CD4-positive, alpha-beta T cell (primary cell): ENCODE measurements at regions of chr7 and their contacts with region 1.

Region 1: DNA sequence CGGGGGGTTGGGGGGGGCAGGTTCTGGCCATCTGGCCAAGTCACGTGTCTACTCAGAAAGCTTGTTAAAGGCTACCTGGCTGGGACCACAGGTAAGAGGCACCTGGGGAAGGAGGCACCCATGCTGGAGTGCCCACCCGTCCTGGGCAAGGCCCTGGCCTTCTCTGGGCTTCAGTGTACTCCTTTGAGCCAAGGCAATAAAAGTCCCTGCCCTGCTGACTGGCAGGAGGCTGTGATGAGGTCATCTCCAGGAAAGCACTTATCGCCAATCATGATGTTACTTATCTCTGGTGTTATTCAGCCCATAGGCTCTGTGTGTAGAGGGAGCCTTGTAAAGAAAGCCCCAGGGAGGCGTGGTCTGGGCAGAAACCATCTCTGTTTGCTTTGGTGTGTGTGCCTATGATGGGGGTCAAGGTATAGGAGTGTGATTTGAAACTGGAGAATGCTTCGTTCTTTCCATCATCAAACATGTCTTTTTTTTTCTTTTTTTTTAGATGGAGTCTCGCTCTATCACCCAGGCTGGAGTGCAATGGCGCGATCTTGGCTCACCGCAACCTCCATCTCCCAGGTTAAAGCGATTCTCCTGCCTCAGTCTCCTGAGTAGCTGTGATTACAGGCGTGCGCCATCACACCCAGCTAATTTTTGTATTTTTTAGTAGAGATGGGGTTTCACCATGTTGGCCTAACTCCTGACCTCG is 2.5 kb upstream of the CLDN4 start:
- DNase-seq: peak in 4 of 14 experiments; percentile 14 to 58 (median 34)
- ATAC-seq: peak; percentile 61
- H3K4me3 ChIP-seq: no peak overlapping the region
- H3K4me3 Mint-ChIP-seq: no peak overlapping the region
- H3K27ac ChIP-seq: no peak overlapping the region
- H3K27ac Mint-ChIP-seq: no peak overlapping the region
- H3K4me1 ChIP-seq: peaks cover 50% of the 10 kb centered on the region
- H3K4me1 Mint-ChIP-seq: peaks cover 43% of the 10 kb centered on the region
- H3K27me3 ChIP-seq: peaks cover 0 to 5% of the 10 kb centered on the region in 2 experiments
- H3K27me3 Mint-ChIP-seq: peaks cover 10% of the 10 kb centered on the region
- CTCF ChIP-seq: no peak

Region 2: DNA sequence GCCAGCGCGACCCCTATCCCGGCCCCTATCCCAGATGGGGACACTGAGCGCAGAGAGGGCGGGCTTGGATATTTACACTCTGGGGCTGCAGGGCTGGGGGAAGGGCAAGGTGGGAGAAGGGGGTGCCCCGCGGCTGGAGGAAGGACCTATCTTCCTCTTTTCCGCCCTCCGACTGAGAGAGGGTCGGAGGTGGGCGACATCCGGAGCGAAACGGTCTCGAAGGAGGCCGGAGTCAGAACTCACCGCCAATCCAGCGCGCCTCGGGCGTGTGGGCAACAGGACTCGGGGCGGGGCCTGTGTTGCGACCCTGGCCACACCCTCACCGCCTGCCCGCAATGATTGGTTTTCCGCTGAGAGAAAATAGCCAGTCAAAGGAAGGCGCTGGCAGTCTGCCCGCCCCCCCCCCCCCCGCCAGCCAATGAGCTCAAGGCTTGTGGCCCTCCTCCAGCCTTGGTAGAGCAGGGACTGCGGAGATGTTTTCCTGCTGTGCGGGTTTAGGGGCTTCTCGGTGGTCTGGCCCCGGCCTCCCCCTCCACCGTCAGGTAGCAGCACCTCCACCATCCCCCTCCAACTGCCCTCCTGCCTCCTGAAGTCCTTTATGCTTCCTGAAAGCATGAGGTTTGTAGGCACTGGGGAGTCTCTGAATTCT is 14.1 kb after region 1 on chr7 and contains the start of gene METTL27:
- CTCF ChIA-PET with region 1: interaction called, 3 read pairs
- POLR2A ChIA-PET with region 1: interaction called, 14 read pairs
- intact Hi-C with region 1: no loop called
- DNase-seq: peak; percentile 79 to 94 (median 87)
- ATAC-seq: peak; percentile 99
- H3K4me3 ChIP-seq: peak within 1 kb of the TSS; percentile 71
- H3K4me3 Mint-ChIP-seq: peak within 1 kb of the TSS; percentile 90
- H3K27ac ChIP-seq: no peak within 1 kb of the TSS
- H3K27ac Mint-ChIP-seq: peak within 1 kb of the TSS; percentile 61
- H3K4me1 ChIP-seq: peaks cover 20% of the 10 kb centered on the region
- H3K4me1 Mint-ChIP-seq: peaks cover 14% of the 10 kb centered on the region
- H3K27me3 ChIP-seq: no peaks in the 10 kb centered on the region
- H3K27me3 Mint-ChIP-seq: no peaks in the 10 kb centered on the region
- CTCF ChIP-seq: no peak
- total RNA-seq, gene METTL27: 1.6 to 2.1 TPM

Region 3: GRCh38 chr7:73971704-73972341 is 143.6 kb after region 1 on chr7:
- CTCF ChIA-PET with region 1: no interaction called
- POLR2A ChIA-PET with region 1: no interaction called
- intact Hi-C with region 1: no loop called
- DNase-seq: peak in 1 of 14 experiments; percentile 22
- ATAC-seq: no peak
- H3K4me3 ChIP-seq: no peak overlapping the region
- H3K4me3 Mint-ChIP-seq: no peak overlapping the region
- H3K27ac ChIP-seq: no peak overlapping the region
- H3K27ac Mint-ChIP-seq: no peak overlapping the region
- H3K4me1 ChIP-seq: no peaks in the 10 kb centered on the region
- H3K4me1 Mint-ChIP-seq: no peaks in the 10 kb centered on the region
- H3K27me3 ChIP-seq: no peaks in the 10 kb centered on the region
- H3K27me3 Mint-ChIP-seq: peaks cover 4% of the 10 kb centered on the region
- CTCF ChIP-seq: no peak